ENCODE measurements at regions of chr3 and their contacts with region 1.

Region 1: DNA sequence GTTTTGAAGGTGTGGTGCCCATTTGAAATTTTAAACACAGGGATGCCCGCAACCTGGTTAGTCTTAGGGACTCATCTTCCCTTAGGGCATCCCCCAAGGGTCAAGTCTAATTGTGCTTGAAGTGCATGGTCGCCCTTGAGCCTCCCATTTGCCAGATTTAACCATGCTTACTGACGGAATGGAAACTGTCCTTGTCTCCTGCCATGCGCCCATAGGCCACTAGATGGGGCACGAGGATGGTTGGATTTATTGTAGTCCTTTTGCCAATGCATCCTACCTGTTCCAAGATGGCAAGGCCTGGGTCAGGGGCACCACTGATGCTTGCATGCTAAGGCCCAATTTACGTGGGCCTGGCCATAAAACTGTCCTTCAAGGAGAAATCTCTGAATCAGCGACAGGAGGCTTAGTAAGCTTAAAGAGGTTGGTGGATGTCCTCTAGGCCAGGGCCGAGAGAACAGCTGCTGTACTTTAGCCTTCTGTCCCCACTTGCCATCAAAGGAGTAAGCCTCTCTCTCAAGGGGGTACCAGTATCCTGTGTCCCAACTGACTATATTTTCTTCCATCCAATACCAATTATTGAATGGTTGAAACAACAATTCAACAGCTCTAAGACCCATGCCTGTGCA is 355.4 kb downstream of the OTOL1 start:
- DNase-seq: peak; percentile 46
- ATAC-seq: peak; percentile 81
- H3K4me3 ChIP-seq: no peak overlapping the region
- H3K27ac ChIP-seq: no peak overlapping the region
- H3K4me1 ChIP-seq: 0 out of 4 replicates have a peak, but pooled peaks cover 0 to 6% of the 10 kb centered on the region in 2 experiments
- H3K27me3 ChIP-seq: no peaks in the 10 kb centered on the region
- CTCF ChIP-seq: peak; percentile 48 to 84 (median 81); a peak in 5 of 6 replicates
- POLR2A ChIP-seq: no peak
- RAD21 ChIP-seq: peak; percentile 80

Region 2: DNA sequence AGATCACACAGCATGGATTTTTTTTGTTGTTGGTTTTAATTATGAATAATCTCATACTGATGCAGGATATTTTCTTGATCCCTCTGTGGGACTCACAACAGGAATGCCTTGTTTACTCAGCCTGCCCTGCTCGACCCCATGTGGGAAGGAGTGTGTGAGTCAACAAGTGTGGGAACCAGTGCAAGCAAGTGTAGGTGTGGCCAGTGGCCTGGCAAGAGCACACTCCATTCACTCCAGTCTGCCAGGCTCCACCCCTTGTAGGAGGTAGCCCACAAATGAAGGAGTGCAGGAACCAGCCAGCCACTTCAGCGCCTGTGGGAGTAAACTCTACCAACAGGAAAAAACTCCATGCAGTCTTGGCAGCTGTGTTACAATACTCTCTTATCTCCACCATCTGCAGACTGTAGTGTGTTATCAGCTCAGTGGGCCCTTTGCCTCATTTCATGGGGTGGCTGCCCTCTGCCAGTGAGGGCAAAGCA is 38.1 kb after region 1 on chr3:
- CTCF ChIA-PET with region 1: no interaction called
- POLR2A ChIA-PET with region 1: no interaction called
- RAD21 ChIA-PET with region 1: no interaction called
- intact Hi-C with region 1: no loop called
- DNase-seq: peak; percentile 44
- ATAC-seq: peak; percentile 100
- H3K4me3 ChIP-seq: no peak overlapping the region
- H3K27ac ChIP-seq: no peak overlapping the region
- H3K4me1 ChIP-seq: peaks cover 8 to 9% of the 10 kb centered on the region in 2 experiments; a peak in 3 of 4 replicates
- H3K27me3 ChIP-seq: no peaks in the 10 kb centered on the region
- CTCF ChIP-seq: no peak
- POLR2A ChIP-seq: no peak
- RAD21 ChIP-seq: no peak

Region 3: DNA sequence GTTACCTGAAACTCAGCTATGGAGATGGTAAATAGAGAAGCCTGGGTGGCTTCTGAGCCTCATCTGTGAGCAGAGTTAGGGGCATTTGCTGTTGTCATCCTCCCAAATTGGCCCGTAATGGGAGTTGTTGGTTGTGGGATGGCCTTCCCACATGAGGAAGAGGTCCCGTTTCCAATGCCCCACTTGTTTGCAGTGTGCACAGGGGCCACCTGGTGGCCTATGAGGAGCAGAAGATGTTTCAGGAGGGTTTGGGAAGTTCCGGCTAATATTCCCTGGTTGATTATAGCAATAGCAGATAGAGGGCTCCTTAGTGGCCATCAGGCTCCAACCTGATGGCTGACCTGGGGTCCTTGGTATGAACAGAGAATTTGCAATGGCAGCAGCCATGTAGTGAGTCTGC is 1191.0 kb after region 1 on chr3:
- CTCF ChIA-PET with region 1: no interaction called
- POLR2A ChIA-PET with region 1: no interaction called
- RAD21 ChIA-PET with region 1: no interaction called
- intact Hi-C with region 1: loop called (anchors 1 kb)
- DNase-seq: peak; percentile 18
- ATAC-seq: peak; percentile 81
- H3K4me3 ChIP-seq: no peak overlapping the region
- H3K27ac ChIP-seq: no peak overlapping the region
- H3K4me1 ChIP-seq: no peaks in the 10 kb centered on the region
- H3K27me3 ChIP-seq: no peaks in the 10 kb centered on the region
- CTCF ChIP-seq: peak; percentile 41 to 53 (median 43); a peak in 5 of 6 replicates
- POLR2A ChIP-seq: no peak
- RAD21 ChIP-seq: peak; percentile 63

Region 4: GRCh38 chr3:163490119-163490518 is 1638.1 kb after region 1 on chr3:
- CTCF ChIA-PET with region 1: interaction called, 3 read pairs
- POLR2A ChIA-PET with region 1: no interaction called
- RAD21 ChIA-PET with region 1: no interaction called
- intact Hi-C with region 1: loop called (anchors 2 kb)
- DNase-seq: peak; percentile 48
- ATAC-seq: peak; percentile 95
- H3K4me3 ChIP-seq: no peak overlapping the region
- H3K27ac ChIP-seq: no peak overlapping the region
- H3K4me1 ChIP-seq: no peaks in the 10 kb centered on the region
- H3K27me3 ChIP-seq: no peaks in the 10 kb centered on the region
- CTCF ChIP-seq: peak; percentile 74 to 81 (median 77)
- POLR2A ChIP-seq: no peak
- RAD21 ChIP-seq: peak; percentile 80